WTC11 (cell line): ENCODE measurements at regions of chr17 and their contacts with region 1.

Region 1: GRCh38 chr17:37770631-37771518 is 26.0 kb upstream of the HNF1B start:
- DNase-seq: peak; percentile 80
- ATAC-seq: peak; percentile 86
- H3K4me3 Mint-ChIP-seq: no peak overlapping the region
- H3K27ac Mint-ChIP-seq: no peak overlapping the region
- H3K4me1 Mint-ChIP-seq: no peaks in the 10 kb centered on the region
- H3K27me3 Mint-ChIP-seq: peaks cover 7% of the 10 kb centered on the region
- CTCF ChIP-seq: peak; percentile 65

Region 2: DNA sequence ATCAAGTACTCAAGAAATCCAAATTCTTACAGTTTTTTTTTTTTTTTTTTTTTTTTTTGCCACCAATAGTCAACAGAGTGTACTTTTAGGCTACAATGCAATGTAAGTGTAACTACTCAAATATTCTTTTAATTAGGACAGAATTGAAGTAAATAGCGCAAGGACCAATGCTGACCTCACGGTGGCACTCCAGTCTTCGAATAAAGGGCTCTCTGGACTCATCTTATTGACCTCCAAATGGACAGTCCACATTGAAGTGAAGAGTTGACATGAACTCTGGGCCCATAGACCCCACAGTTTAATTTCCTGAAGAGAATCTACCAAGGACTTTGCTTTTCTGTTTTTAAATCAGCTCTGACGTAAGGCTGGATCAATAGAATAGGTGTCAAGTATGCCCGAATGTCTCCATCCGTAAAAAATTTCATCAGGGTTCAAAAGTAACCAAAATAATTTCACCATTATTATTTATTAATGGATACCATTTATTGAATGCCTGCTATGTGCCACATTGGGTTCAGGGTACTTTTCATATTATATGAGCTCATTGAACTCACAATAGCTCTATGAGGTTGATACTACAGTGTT is 120.4 kb before region 1 on chr17:
- CTCF ChIA-PET with region 1: interaction called, 14 read pairs
- POLR2A ChIA-PET with region 1: no interaction called
- DNase-seq: peak; percentile 43
- ATAC-seq: peak; percentile 55; the same call in 1 of the 2 replicates
- H3K4me3 Mint-ChIP-seq: no peak overlapping the region
- H3K27ac Mint-ChIP-seq: no peak overlapping the region
- H3K4me1 Mint-ChIP-seq: no peaks in the 10 kb centered on the region
- H3K27me3 Mint-ChIP-seq: peaks cover 23% of the 10 kb centered on the region
- CTCF ChIP-seq: no peak

Region 3: DNA sequence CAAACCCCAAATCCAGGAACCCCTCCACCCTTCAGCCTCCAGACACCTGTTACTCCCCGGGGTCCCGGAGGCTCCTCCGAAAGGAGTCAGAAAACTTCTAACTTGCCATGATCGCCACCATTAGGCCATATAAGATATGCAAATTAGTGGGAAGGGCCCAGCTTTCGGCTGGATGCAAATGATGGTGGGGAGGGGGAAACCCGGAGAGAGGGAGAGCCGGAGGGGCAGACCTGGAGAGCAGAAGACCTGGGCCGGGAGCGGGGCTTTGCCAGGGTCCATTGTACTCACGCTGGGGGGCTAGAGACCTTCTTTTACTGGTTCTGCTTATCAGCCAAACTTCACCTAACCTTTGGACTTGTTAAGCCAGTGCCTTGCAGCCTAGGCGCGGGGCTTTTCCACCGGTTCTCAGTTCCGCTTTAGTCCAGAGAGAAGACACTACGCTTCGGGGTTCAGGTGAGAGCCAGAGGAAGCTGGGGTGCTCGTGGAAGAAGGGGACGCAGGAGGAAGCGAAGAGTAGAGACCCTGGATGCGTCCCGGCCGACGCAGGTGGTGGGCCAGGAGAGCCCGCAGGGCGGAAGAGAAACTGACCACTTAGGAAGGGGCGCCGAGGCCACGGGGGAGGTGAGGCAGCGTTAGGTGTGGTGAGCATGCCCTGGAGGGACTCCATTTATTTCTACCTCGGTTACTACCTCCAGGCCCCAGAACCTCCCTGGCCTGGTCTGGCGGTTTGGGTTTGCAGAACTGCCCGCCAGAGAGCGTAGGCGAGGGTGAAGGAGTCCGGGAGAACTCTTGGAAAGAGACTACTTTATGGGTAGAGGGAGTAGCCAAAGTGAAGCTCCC is 25.7 kb before region 1 on chr17 and contains the start of gene HNF1B:
- CTCF ChIA-PET with region 1: interaction called, 20 read pairs
- POLR2A ChIA-PET with region 1: interaction called, 3 read pairs
- DNase-seq: peak; percentile 60
- ATAC-seq: peak; percentile 61
- H3K4me3 Mint-ChIP-seq: peak within 1 kb of the TSS; percentile 81
- H3K27ac Mint-ChIP-seq: no peak within 1 kb of the TSS
- H3K4me1 Mint-ChIP-seq: peaks cover 24% of the 10 kb centered on the region
- H3K27me3 Mint-ChIP-seq: peaks cover 93% of the 10 kb centered on the region
- CTCF ChIP-seq: no peak
- total RNA-seq, gene HNF1B: 0.14 to 0.26 TPM (median 0.23 TPM) in 3 replicates

Region 4: GRCh38 chr17:37884516-37884915 is 113.6 kb after region 1 on chr17:
- CTCF ChIA-PET with region 1: no interaction called
- POLR2A ChIA-PET with region 1: no interaction called
- DNase-seq: no peak
- ATAC-seq: no peak
- H3K4me3 Mint-ChIP-seq: no peak overlapping the region
- H3K27ac Mint-ChIP-seq: peak overlapping the region; percentile 54
- H3K4me1 Mint-ChIP-seq: peaks cover 12% of the 10 kb centered on the region
- H3K27me3 Mint-ChIP-seq: no peaks in the 10 kb centered on the region; the same call in 1 of the 2 replicates
- CTCF ChIP-seq: no peak